Ascending aorta (tissue), 2 donors: ENCODE measurements at regions of chr2 and their contacts with region 1.

Region 1: DNA sequence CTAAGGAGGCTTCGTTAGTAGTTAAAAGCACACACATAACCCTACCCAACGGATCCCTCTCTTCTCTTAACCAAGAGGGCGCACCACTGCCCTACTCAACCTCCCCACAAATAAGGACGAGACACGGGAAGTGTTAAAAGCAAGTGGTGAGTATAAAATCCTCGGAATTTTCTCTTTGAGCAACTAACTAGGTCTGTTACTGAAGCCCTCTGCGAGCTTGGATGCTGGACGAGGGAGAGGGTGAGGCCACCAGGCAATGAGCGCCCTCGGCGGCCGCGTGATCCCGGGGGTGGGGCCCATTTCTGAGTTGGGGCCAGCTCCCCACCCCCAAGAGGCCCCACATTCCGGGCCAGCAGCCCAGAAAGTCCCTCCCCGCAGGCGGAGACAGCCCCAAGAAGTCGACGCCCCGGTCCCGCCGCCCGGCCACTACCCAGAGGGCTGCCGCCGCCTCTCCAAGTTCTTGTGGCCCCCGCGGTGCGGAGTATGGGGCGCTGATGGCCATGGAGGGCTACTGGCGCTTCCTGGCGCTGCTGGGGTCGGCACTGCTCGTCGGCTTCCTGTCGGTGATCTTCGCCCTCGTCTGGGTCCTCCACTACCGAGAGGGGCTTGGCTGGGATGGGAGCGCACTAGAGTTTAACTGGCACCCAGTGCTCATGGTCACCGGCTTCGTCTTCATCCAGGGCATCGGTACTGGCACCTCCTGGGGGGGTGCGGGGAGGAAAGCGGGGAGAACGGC is at the start of gene CYBRD1:
- DNase-seq: peak; percentile 47 to 93
- H3K4me3 ChIP-seq: peak within 1 kb of the TSS; percentile 72 to 90
- H3K27ac ChIP-seq: peak within 1 kb of the TSS; percentile 94 to 97
- H3K4me1 ChIP-seq: peaks cover 0 to 23% of the 10 kb centered on the region in 2 donors
- H3K27me3 ChIP-seq: no peaks in the 10 kb centered on the region
- CTCF ChIP-seq: no peak
- total RNA-seq, gene CYBRD1: 222 TPM

Region 2: DNA sequence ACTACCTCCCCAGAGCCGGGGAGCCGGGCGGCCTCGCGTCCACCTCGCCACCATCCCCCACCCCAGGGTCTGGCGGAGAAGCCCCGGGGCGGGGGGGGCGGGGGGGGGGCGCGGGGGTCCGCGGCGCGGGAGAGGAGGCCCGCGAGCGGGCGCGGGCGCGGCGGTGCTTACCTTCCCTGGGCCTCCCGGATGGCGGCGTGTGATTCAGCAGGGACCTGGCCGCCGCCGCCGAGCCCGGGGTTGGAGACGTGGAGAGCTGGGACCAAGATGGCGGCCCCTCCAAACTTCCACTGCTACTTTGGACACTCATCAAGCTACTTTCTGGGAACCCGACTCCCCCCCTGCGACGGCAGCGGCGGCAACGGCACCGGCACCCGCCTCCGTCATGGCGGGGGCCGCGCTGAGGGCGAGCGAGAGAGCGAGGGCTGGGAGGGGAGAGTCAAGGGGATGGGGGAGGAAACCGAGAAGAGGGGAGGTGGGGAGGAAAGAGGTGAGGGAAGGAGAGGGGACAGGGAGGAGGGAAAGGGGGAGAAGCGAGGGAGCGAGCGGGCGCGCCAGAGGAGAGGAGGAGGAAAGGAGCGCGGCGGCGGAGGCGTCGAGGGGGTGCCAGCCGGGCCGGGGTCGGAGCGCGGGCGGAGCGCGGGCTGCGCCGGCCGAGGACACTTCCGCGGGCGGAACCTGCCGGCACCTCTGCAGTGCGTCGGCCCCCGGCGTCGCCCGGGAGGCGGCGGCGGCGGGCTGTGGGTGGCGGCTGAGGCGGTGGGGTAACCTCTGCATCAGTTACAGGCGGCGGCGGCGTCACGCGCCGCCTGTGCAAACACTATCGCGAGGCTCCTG is 361.9 kb before region 1 on chr2 and contains the start of gene TLK1:
- intact Hi-C with region 1: loop called (anchors 5 kb)
- DNase-seq: peak; percentile 17 to 85
- H3K4me3 ChIP-seq: peak within 1 kb of the TSS; percentile 96 to 97
- H3K27ac ChIP-seq: peak within 1 kb of the TSS; percentile 98 to 99
- H3K4me1 ChIP-seq: peaks cover 0 to 7% of the 10 kb centered on the region in 2 donors
- H3K27me3 ChIP-seq: no peaks in the 10 kb centered on the region
- CTCF ChIP-seq: no peak
- total RNA-seq, gene TLK1: 32.2 TPM

Region 3: DNA sequence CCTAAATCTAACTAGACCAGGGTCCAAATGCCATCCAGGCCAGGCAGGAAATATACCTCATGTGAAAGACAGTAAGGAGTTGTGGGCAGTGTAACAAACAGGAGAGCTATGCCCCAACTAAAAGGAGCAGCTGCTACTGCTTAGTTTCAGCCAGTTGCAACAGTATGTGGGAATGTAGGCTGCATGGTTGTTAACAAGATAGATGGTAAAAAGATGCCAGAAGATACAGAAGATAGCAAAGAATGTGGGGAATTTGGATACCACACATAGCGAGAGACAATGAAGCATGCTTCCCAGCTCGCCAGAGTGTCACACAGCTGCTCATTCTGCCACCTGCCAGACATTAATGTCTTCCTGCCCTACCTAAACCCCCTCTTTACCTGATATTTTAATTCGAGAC is 39.3 kb before region 1 on chr2:
- intact Hi-C with region 1: loop called (anchors 1 kb)
- DNase-seq: no peak
- H3K4me3 ChIP-seq: no peak overlapping the region
- H3K27ac ChIP-seq: no peak overlapping the region
- H3K4me1 ChIP-seq: no peaks in the 10 kb centered on the region
- H3K27me3 ChIP-seq: no peaks in the 10 kb centered on the region
- CTCF ChIP-seq: no peak